HEK293T (cell line): ENCODE measurements at regions of chr2 and their contacts with region 1.

Region 1: GRCh38 chr2:74602586-74603281 is 45.4 kb downstream of the M1AP start:
- DNase-seq: no peak

Region 2: DNA sequence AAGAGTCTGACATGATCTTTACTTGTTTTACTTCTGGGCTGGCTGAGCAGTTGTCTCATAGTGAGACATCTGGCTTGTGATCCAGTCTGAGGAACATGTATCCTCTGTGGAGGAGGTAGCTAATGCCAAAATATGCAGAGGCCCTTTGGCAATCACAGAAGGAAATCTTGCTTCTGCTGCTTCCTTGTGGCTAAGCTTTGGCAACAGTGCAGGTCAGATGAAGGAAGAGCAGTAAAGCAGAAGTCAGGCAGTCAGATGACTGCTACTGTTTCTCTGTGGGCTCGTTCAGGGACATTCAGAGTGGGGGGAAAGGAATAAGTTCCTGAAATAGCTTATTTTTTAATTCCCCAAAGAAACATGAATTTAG is 25.9 kb before region 1 on chr2:
- CTCF ChIA-PET with region 1: no interaction called
- POLR2A ChIA-PET with region 1: no interaction called
- DNase-seq: no peak

Region 3: GRCh38 chr2:74671479-74671878 is 68.7 kb after region 1 on chr2:
- CTCF ChIA-PET with region 1: interaction called, 16 read pairs
- POLR2A ChIA-PET with region 1: no interaction called
- DNase-seq: no peak